Activated CD8-positive, alpha-beta memory T cell treated with anti-CD3 and anti-CD28 coated beads, Interleukin-2, amount 10 ng/mL, durations not matched to agents 7 days and 5 days (primary cell): ENCODE measurements at regions of chr2 and their contacts with region 1.

Region 1: DNA sequence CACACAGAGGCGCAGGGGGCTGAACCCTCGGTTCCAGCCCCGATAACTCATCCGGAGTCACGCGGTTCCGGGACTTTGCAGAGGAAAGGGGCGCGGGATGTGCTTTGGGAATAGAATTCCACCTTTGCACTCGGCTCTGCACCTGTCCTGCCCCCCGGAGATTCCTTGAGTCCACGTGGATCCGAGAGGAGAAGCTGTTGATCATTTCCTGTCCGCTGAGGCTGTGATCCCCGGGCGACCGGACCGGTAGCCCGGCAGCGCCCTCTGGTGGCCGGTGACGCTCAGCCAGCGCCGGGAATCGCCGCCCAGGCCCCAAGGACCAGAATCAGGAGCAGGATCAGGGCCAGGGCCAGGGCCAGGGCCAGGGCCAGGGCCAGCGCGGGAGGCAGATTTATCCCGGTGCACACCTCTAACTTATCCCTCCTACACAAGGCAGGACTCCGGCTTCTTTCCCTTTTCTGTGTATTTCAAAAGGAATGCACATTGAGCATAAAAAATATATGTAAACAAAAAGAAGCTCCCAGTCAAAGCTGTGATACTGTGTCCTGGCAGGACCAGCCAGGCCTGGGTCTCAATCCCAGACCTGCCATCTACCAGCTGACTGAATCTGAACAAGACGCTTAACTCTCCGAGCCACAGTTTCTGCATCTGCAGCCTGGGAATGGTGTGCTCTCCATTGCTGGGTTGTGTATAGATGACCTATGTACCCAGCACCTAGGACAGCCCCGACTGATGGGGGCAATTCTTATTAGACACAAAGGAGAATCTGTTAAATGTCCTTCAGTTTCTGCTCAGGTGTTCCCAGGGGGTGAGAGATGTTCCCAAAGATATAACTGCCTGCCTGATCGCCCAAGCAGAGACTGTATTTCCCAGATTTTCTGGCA is 8.5 kb upstream of the SPATA3 start:
- DNase-seq: peak; percentile 81
- ATAC-seq: peak; percentile 43
- H3K4me3 Mint-ChIP-seq: peak overlapping the region; percentile 53
- H3K27ac Mint-ChIP-seq: peak overlapping the region; percentile 69
- H3K4me1 Mint-ChIP-seq: peaks cover 44% of the 10 kb centered on the region
- H3K27me3 Mint-ChIP-seq: peaks cover 37% of the 10 kb centered on the region

Region 2: DNA sequence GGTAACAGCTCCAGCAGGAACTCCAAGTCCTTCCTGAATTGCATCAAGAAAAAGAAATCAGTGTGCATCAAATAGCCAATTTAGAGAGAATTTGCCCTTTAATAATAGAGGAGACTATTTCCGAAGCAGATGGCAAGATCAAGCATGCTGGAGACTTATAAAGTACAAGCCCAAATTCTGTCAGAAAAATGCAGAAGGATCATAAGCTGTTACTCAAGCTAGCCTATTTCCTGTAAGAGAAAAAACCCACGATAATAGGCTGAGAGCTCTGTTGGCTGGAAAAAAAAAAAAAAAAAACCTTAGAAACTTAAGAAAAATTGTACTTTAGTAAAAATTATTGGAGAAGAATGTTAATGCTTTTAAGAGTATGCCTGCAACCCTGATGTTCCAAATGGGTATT is 147.1 kb before region 1 on chr2:
- CTCF ChIA-PET with region 1: interaction called, 11 read pairs
- DNase-seq: no peak
- ATAC-seq: no peak
- H3K4me3 Mint-ChIP-seq: no peak overlapping the region
- H3K27ac Mint-ChIP-seq: no peak overlapping the region
- H3K4me1 Mint-ChIP-seq: peaks cover under 1% of the 10 kb centered on the region
- H3K27me3 Mint-ChIP-seq: peaks cover 30% of the 10 kb centered on the region

Region 3: DNA sequence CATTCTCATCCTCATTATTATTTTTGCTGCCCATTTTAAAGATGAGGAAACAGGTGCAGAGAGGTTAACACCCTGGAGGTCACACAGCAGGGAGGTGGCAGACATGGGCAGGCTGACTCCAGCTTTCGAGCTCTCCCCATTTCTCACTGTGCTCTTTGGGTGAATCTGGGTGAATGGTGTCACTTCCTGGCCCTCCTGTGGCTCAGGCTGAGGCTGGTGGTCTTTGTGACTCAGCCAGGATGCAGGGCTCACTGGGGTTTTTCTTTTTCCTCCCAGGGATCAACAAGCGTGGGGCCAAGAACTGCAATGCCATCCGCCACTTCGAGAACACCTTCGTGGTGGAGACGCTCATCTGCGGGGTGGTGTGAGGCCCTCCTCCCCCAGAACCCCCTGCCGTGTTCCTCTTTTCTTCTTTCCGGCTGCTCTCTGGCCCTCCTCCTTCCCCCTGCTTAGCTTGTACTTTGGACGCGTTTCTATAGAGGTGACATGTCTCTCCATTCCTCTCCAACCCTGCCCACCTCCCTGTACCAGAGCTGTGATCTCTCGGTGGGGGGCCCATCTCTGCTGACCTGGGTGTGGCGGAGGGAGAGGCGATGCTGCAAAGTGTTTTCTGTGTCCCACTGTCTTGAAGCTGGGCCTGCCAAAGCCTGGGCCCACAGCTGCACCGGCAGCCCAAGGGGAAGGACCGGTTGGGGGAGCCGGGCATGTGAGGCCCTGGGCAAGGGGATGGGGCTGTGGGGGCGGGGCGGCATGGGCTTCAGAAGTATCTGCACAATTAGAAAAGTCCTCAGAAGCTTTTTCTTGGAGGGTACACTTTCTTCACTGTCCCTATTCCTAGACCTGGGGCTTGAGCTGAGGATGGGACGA is 109.4 kb before region 1 on chr2:
- CTCF ChIA-PET with region 1: interaction called, 20 read pairs
- DNase-seq: peak; percentile 89
- ATAC-seq: peak; percentile 93
- H3K4me3 Mint-ChIP-seq: peak overlapping the region; percentile 54
- H3K27ac Mint-ChIP-seq: peak overlapping the region; percentile 92
- H3K4me1 Mint-ChIP-seq: peaks cover 46% of the 10 kb centered on the region
- H3K27me3 Mint-ChIP-seq: peaks cover 24% of the 10 kb centered on the region

Region 4: DNA sequence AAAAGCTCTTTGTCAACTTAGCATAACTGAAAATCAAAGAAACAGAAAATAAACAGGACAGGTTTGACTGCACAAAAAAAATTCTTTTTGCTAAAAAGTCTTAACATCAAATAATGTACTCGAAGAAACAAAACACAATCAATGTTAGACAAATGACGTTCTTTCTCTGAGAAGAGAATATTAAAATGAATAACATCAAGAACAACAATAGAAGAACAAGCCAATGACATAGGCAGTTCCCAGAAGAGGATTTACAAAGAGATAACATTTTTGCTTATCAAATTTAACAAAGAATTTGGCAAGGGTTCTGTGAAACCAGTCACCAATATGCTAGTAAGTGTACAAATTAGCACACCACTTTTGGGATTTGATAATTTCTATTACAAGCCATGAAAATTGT is 68.1 kb before region 1 on chr2:
- CTCF ChIA-PET with region 1: interaction called, 309 read pairs
- DNase-seq: no peak
- ATAC-seq: no peak
- H3K4me3 Mint-ChIP-seq: peak overlapping the region; percentile 70
- H3K27ac Mint-ChIP-seq: peak overlapping the region; percentile 96
- H3K4me1 Mint-ChIP-seq: peaks cover 63% of the 10 kb centered on the region
- H3K27me3 Mint-ChIP-seq: peaks cover 19% of the 10 kb centered on the region

Region 5: DNA sequence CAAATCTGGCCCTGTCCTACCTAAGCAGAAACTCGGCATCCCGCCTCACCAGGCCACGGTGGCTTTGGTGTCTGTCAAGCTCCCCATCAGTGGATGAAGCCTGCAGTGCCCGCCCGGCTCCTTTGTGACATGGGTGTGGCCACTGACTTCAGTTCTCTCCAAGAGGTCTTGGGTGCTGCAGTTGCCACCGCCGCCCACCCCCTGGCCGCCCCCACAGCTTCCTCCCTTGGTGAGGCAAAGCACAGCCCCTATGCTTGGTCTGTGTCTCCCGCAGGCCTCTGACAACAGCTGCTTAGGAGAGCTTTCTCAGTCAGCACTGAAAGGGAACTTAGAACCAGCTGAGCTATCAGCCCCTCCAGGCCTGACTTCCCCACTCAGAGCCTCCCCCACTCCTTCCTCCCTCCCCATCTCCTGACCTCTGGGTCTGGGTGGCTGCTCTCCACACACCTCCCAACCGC is 39.4 kb before region 1 on chr2:
- CTCF ChIA-PET with region 1: interaction called, 27 read pairs
- DNase-seq: peak; percentile 81
- ATAC-seq: peak; percentile 22
- H3K4me3 Mint-ChIP-seq: peak overlapping the region; percentile 79
- H3K27ac Mint-ChIP-seq: peak overlapping the region; percentile 89
- H3K4me1 Mint-ChIP-seq: peaks cover 84% of the 10 kb centered on the region
- H3K27me3 Mint-ChIP-seq: peaks cover 31% of the 10 kb centered on the region

Region 6: DNA sequence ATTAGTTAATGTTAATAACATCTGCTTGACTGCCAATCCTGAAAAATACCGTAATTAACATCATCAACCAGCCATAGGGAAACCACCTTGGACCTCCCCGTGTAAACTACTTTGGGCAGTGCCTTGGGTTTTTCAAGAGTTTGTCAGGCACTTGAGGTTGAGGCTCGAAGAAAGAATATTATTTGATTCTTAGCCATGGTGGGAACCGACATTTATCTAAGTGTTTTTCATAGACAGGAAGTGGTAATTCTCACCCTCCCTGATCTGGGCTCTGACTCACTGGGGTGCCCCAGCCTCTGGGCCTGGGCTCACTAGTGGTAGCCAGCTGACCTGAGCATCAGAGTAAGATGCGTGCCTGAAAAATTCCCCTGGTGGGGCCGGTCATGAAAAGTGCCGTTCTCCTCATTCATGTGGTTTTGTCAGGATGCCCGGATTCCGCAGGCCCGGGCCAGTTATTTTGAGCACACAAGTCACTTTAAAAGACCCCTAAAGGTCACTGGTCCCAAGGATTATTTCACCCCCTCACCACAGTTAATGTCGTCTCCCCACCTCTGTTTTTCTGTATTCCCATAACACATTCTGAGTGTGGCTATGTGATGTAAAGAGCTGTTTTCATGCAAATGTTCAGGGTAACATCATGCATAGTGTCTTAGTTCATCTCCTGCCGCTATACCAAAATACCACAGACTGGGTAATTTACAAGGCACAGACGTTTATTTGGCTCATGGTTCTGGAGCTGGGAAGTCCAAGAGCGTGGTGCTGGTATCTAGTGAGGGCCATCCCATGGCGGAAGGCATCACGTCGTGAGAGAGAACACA is 13.1 kb before region 1 on chr2:
- CTCF ChIA-PET with region 1: interaction called, 10 read pairs
- DNase-seq: peak; percentile 88
- ATAC-seq: peak; percentile 89
- H3K4me3 Mint-ChIP-seq: peak overlapping the region; percentile 39
- H3K27ac Mint-ChIP-seq: peak overlapping the region; percentile 88
- H3K4me1 Mint-ChIP-seq: peaks cover 76% of the 10 kb centered on the region
- H3K27me3 Mint-ChIP-seq: peaks cover 38% of the 10 kb centered on the region

Region 7: GRCh38 chr2:231056453-231057424 is 69.4 kb after region 1 on chr2 and contains the start of gene PSMD1:
- CTCF ChIA-PET with region 1: interaction called, 11 read pairs
- DNase-seq: peak; percentile 95
- ATAC-seq: peak; percentile 86
- H3K4me3 Mint-ChIP-seq: peak within 1 kb of the TSS; percentile 86
- H3K27ac Mint-ChIP-seq: peak within 1 kb of the TSS; percentile 100
- H3K4me1 Mint-ChIP-seq: peaks cover 62% of the 10 kb centered on the region
- H3K27me3 Mint-ChIP-seq: peaks cover 8% of the 10 kb centered on the region
- total RNA-seq, gene PSMD1: 89.1 to 128 TPM